ENCODE measurements at regions of chr13 and their contacts with region 1.

Region 1: DNA sequence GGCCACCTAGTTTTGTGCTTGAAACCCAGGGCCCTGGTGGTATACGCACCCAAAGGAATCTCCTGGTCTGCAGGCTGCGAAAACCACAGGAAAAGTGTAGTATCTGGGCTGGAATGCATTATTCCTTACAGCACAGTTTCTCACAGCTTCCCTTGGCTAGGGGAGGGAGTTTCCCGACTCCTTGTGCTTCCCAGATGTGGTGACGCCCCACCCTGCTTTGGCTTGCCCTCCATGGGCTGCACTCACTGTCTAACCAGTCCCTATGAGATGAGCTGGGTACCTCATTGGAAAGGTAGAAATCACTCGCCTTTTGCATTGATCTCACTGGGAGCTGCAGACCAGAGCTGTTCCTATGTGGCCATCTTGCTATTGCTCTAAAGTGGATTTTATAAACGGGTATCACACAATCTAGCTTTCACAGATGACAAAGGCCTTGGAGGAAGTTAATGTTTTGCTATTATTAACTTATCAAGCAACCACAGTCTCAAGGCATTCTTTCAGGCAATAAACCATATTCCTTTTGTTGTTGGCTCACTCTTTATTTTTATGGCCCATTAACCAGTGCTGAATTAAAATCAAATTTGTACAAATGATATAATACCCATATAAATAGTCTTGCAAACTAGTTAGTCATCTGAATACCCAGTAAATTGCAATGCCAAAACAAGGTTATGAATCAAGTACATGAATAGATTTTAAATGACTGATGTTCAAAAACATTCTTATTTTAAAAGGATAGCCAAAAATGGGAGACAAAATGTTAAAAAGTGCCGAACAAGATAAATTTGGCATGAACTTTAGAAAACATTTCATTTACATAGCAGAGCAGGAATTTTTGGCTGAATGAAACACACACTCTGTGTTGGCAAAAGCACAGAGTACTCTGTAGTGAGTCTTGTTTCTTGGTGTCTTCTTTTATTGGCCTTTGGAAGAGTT is 475.4 kb upstream of the ARGLU1 start:
- DNase-seq: no peak
- H3K4me3 ChIP-seq: no peak overlapping the region
- H3K27ac ChIP-seq: no peak overlapping the region
- H3K4me1 ChIP-seq: peaks cover 0 to 14% (median 6%) of the 10 kb centered on the region in 4 donors
- H3K27me3 ChIP-seq: no peaks in the 10 kb centered on the region
- CTCF ChIP-seq: no peak
- EP300 ChIP-seq: no peak
- POLR2A ChIP-seq: no peak

Region 2: GRCh38 chr13:107006661-107007060 is 36.6 kb before region 1 on chr13:
- intact Hi-C with region 1: loop called (anchors 5 kb)
- DNase-seq: no peak
- H3K4me3 ChIP-seq: no peak overlapping the region
- H3K27ac ChIP-seq: no peak overlapping the region
- H3K4me1 ChIP-seq: no peaks in the 10 kb centered on the region
- H3K27me3 ChIP-seq: no peaks in the 10 kb centered on the region
- CTCF ChIP-seq: no peak
- EP300 ChIP-seq: no peak
- POLR2A ChIP-seq: no peak

Measured in sigmoid colon (tissue), 7 donors.